Activated CD8-positive, alpha-beta T cell treated with anti-CD3 and anti-CD28 coated beads for 36 hours (primary cell): ENCODE measurements at regions of chr2 and their contacts with region 1.

Region 1: DNA sequence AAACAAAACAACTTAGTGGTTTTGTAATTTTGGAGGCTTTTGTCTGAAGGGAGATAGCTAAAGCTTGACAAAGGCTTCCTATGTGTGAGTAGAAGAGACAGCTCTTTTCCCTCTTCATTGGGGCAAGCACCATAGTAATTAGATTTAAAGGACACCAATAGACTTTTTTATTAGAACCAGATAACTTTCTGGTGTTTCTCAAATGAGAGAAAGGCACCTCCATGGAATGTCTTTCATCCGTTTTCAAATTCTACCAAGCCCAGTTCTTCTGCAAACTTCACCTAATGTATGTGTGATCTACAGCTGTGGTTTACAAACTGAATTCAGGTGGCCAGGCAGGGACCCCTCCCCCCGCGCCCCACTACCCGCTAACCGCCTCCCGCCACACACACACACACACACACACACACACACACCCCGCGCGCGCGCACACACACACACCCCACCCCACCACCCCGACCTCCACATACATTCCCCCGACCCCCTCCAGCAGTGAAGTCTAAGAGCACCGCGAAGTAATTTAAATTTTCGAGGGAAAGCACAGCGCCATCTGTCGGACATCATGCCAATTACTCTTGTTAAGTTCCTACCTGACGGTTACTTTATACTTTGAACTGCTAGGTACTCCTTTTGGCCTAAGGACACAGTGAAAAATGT is 31.6 kb upstream of the PPP1R1C start:
- DNase-seq: peak; percentile 81
- ATAC-seq: peak; percentile 87
- H3K4me3 Mint-ChIP-seq: peak overlapping the region; percentile 40
- H3K27ac Mint-ChIP-seq: no peak overlapping the region
- H3K4me1 Mint-ChIP-seq: peaks cover 6% of the 10 kb centered on the region
- H3K27me3 Mint-ChIP-seq: peaks cover 6% of the 10 kb centered on the region
- CTCF ChIP-seq: peak; percentile 47

Region 2: GRCh38 chr2:181904022-181904632 is 49.9 kb before region 1 on chr2:
- CTCF ChIA-PET with region 1: interaction called, 11 read pairs
- POLR2A ChIA-PET with region 1: no interaction called
- intact Hi-C with region 1: no loop called
- DNase-seq: peak; percentile 6
- ATAC-seq: no peak
- H3K4me3 Mint-ChIP-seq: no peak overlapping the region
- H3K27ac Mint-ChIP-seq: no peak overlapping the region
- H3K4me1 Mint-ChIP-seq: peaks cover 27% of the 10 kb centered on the region
- H3K27me3 Mint-ChIP-seq: no peaks in the 10 kb centered on the region
- CTCF ChIP-seq: peak; percentile 67

Region 3: GRCh38 chr2:181937473-181937872 is 16.5 kb before region 1 on chr2:
- CTCF ChIA-PET with region 1: interaction called, 11 read pairs
- POLR2A ChIA-PET with region 1: no interaction called
- intact Hi-C with region 1: no loop called
- DNase-seq: no peak
- ATAC-seq: no peak
- H3K4me3 Mint-ChIP-seq: no peak overlapping the region
- H3K27ac Mint-ChIP-seq: no peak overlapping the region
- H3K4me1 Mint-ChIP-seq: no peaks in the 10 kb centered on the region
- H3K27me3 Mint-ChIP-seq: peaks cover 3% of the 10 kb centered on the region
- CTCF ChIP-seq: no peak